OCI-LY7 (cell line): ENCODE measurements at regions of chr4 and their contacts with region 1.

Region 1: DNA sequence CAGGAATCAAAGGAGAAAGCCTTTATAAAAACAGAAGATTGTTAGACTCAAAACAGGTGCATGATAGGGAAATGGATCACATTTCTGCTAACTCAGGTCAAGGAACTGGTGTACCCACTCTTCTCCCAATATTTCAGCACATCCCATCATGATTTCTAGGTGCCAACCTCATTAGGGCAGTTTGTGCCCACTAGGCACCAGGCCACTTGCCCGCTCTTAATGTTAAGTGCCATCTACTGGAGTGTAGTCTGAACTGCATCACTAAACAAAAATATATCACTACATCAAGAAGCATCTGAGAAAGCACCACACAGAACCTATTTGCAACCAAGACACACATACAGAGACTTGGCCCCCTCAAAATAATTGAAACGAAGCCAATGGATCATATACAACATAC is 140.4 kb upstream of the GRID2 start:
- DNase-seq: peak; percentile 14
- H3K4me3 ChIP-seq: no peak overlapping the region
- H3K27ac ChIP-seq: no peak overlapping the region
- H3K4me1 ChIP-seq: no peaks in the 10 kb centered on the region
- CTCF ChIP-seq: peak; percentile 71

Region 2: DNA sequence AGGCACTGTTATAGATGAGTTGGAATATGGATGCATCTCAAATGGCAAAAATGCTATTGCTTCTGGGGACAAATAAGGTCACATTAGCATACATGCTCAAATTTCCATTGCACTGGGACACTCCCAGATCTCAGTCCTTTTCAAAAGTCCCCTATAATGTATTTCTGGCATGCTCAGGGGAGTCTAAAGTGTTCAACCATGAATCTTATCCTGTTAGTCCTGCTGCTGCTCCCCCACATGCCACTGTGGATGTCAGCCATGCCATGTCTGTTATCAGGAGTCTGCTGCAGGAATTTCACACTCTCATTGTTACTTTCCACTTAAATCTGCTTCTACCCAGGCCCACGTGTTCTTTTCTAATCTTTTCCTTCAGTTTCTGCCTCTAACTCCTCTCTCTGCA is 1035.5 kb before region 1 on chr4:
- CTCF ChIA-PET with region 1: no interaction called
- POLR2A ChIA-PET with region 1: no interaction called
- intact Hi-C with region 1: loop called (anchors 10 kb)
- DNase-seq: no peak
- H3K4me3 ChIP-seq: no peak overlapping the region
- H3K27ac ChIP-seq: no peak overlapping the region
- H3K4me1 ChIP-seq: no peaks in the 10 kb centered on the region
- CTCF ChIP-seq: no peak

Region 3: DNA sequence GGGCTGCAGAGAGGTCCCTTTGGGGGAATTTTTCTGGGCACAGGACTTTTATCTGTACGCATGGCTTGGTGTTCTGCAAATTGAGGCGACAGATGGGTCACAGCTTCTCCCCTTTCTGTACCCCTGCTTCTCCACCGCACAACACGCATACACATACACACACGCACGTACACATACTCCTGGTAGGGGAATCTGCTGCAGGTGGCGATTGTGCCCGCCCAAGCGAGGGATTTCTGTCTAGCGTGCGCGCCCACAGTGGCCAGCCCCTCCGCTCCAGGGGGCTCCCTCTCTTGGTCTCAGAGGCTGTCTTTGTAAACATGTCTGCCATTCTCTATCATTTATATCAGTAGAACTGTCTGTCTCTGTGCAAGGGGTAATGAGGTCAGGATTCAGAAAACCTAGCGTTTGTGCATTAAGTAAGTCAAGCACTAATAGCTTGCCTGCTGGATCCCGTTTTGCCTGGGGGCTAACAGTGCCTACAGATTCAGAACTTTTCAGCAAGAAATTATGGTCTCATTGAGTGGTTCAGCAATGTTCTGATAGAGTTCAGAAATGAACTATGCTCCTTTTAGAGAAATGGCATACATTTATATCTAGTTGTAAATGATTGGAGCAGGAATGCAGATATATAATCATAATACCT is 142.7 kb after region 1 on chr4:
- CTCF ChIA-PET with region 1: no interaction called
- POLR2A ChIA-PET with region 1: no interaction called
- intact Hi-C with region 1: no loop called
- DNase-seq: no peak
- H3K4me3 ChIP-seq: no peak overlapping the region
- H3K27ac ChIP-seq: no peak overlapping the region
- H3K4me1 ChIP-seq: no peaks in the 10 kb centered on the region
- CTCF ChIP-seq: no peak